Transverse colon (tissue), 4 donors: ENCODE measurements at regions of chr19 and their contacts with region 1.

Region 1: GRCh38 chr19:45768984-45769782 is at the start of gene SIX5:
- DNase-seq: peak; percentile 99
- H3K4me3 ChIP-seq: peak within 1 kb of the TSS; percentile 64 to 86 (median 80)
- H3K27ac ChIP-seq: peak within 1 kb of the TSS; percentile 86 to 98 (median 94)
- H3K4me1 ChIP-seq: peaks cover 19 to 49% (median 40%) of the 10 kb centered on the region in 4 donors
- H3K27me3 ChIP-seq: no peaks in the 10 kb centered on the region
- CTCF ChIP-seq: no peak
- EP300 ChIP-seq: no peak
- POLR2A ChIP-seq: peak; percentile 85
- total RNA-seq, gene SIX5: 6.7 to 40.4 (median 9.7) TPM

Region 2: GRCh38 chr19:45717166-45717982 is 51.8 kb before region 1 on chr19:
- in situ Hi-C with region 1: no loop called
- intact Hi-C with region 1: loop called (anchors 10 kb)
- DNase-seq: peak; percentile 99
- H3K4me3 ChIP-seq: peak overlapping the region; percentile 47 to 79 (median 60)
- H3K27ac ChIP-seq: peak overlapping the region; percentile 89 to 95 (median 93)
- H3K4me1 ChIP-seq: peaks cover 11 to 41% (median 22%) of the 10 kb centered on the region in 4 donors
- H3K27me3 ChIP-seq: no peaks in the 10 kb centered on the region
- CTCF ChIP-seq: peak in 2 of 5 experiments; percentile 34 to 50
- EP300 ChIP-seq: peak; percentile 92
- POLR2A ChIP-seq: peak; percentile 67

Region 3: GRCh38 chr19:46009530-46010510 is 240.6 kb after region 1 on chr19:
- in situ Hi-C with region 1: no loop called
- intact Hi-C with region 1: no loop called
- DNase-seq: peak; percentile 69
- H3K4me3 ChIP-seq: no peak overlapping the region
- H3K27ac ChIP-seq: no peak overlapping the region
- H3K4me1 ChIP-seq: peaks cover 2 to 6% (median 5%) of the 10 kb centered on the region in 4 donors
- H3K27me3 ChIP-seq: peaks cover 23% of the 10 kb centered on the region
- CTCF ChIP-seq: peak; percentile 67 to 91 (median 87)
- EP300 ChIP-seq: no peak
- POLR2A ChIP-seq: no peak